T-cell (primary cell): ENCODE measurements at regions of chr12 and their contacts with region 1.

Region 1: GRCh38 chr12:110449799-110450497 is at the start of gene ARPC3:
- DNase-seq: peak; percentile 89 to 97 (median 94)
- ATAC-seq: peak; percentile 93 to 99 (median 98)
- H3K4me3 ChIP-seq: peak within 1 kb of the TSS; percentile 95 to 99
- H3K4me3 Mint-ChIP-seq: peak within 1 kb of the TSS; percentile 100
- H3K27ac ChIP-seq: peak within 1 kb of the TSS; percentile 89
- H3K27ac Mint-ChIP-seq: peak within 1 kb of the TSS; percentile 100
- H3K4me1 ChIP-seq: peaks cover 10 to 39% of the 10 kb centered on the region in 2 experiments
- H3K4me1 Mint-ChIP-seq: peaks cover 39 to 44% (median 43%) of the 10 kb centered on the region in 3 donors
- H3K27me3 ChIP-seq: no peaks in the 10 kb centered on the region
- H3K27me3 Mint-ChIP-seq: no peaks in the 10 kb centered on the region
- total RNA-seq, gene ARPC3: 177 to 204 (median 191) TPM

Region 2: DNA sequence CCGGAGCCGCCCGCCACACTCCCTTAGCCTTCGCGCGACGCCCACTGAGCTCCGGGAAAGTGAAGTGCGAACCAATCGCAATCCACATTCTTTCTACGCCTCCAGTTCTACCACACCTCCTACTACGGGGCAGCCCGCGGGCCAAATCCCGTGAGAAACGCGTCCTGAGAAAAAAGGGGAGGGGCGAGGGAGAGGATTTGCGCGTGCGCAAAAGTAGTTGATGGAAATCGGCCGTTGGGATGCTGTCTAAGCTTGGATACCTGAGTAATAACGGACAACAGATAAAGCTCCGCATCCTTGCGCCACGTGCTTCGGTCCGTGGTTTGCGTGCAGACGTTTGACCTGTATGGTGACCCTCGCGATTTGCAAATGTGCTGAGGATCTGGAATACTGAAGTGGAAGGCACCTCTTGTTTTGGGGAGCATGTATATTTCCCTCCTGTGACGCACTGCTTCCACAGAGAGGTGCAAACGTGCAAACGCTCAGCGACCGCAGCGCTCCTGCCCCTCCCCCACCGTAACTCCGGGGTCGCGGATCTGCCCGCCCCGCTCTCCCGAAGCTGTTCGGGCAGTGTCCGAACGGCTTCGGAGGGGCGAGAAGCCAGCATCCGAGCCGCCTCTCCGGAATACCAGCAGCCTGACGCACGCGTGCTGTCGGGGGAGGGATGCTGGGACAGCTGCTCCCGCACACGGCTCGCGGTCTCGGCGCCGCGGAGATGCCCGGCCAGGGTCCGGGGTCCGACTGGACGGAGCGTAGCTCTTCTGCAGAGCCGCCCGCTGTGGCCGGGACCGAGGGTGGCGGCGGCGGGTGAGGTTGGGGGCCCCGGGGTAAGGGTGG is 18.5 kb after region 1 on chr12 and contains the starts of genes FAM216A and GPN3:
- CTCF ChIA-PET with region 1: interaction called, 7 to 49 read pairs
- POLR2A ChIA-PET with region 1: interaction called, 5 to 9 read pairs
- DNase-seq: peak; percentile 90 to 97 (median 93)
- ATAC-seq: peak; percentile 84 to 90 (median 86)
- H3K4me3 ChIP-seq: peak within 1 kb of the TSS; percentile 84 to 91
- H3K4me3 Mint-ChIP-seq: peak within 1 kb of the TSS; percentile 81 to 97 (median 97)
- H3K27ac ChIP-seq: peak within 1 kb of the TSS; percentile 81
- H3K27ac Mint-ChIP-seq: peak within 1 kb of the TSS; percentile 90 to 93
- H3K4me1 ChIP-seq: peaks cover 10 to 26% of the 10 kb centered on the region in 2 experiments
- H3K4me1 Mint-ChIP-seq: peaks cover 30 to 44% (median 41%) of the 10 kb centered on the region in 3 donors
- H3K27me3 ChIP-seq: no peaks in the 10 kb centered on the region
- H3K27me3 Mint-ChIP-seq: no peaks in the 10 kb centered on the region
- total RNA-seq, gene FAM216A: 6.3 to 16.5 (median 13.2) TPM
- total RNA-seq, gene GPN3: 6.3 to 19.1 (median 13.4) TPM

Region 3: DNA sequence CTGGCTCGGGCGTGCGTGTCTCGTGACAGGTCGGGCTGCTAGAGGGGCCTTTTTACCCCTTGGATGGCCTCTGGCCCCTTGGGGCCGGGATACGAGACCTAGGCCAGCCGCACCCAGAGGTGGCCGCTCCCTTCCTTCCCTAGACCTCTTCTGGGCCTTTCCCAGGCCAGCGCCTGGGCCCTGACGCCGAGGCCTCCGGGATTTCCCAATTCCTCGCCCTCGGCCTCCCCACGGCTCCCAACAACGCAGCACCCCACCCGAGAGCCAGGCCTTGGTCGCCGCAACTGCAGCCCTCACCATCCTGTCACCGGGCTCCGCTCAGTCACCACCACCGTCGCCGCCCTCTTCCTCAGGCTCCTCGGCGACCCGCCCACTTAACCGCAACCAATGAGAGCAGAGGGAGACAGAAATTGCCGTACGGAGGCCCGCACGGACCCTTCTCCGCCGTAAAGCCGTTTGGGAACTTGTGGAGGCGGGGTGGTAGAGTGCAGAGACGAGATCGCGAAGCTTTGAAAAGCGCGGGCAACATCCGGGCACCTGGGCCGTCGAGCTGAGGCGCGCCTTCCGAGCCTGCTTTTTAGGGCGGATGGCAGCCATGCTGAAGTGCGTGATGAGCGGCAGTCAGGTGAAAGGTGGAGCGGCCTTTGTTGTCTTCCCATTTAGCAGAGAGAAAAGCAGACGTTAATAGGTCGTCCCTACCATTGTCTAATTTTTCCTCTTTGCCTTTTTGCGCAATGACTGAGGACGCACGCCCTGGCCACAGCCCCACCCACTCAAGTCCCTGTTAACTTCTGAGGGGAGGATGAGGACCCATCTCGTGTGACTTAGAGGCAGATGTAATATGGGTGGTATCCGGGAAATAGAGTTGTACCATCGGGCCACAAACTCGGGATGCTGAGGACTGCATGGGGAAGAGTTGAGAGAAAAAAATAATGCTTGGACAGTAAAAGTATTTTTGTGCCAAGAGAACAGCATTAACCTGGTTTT is 52.1 kb after region 1 on chr12 and contains the starts of genes RAD9B and VPS29:
- CTCF ChIA-PET with region 1: interaction called in 1 of 2 experiments, 8 read pairs
- POLR2A ChIA-PET with region 1: interaction called, 4 to 12 read pairs
- DNase-seq: peak; percentile 96 to 100 (median 99)
- ATAC-seq: peak; percentile 93 to 96 (median 95)
- H3K4me3 ChIP-seq: peak within 1 kb of the TSS; percentile 74 to 88
- H3K4me3 Mint-ChIP-seq: peak within 1 kb of the TSS; percentile 90 to 99 (median 97)
- H3K27ac ChIP-seq: peak within 1 kb of the TSS; percentile 86
- H3K27ac Mint-ChIP-seq: peak within 1 kb of the TSS; percentile 98
- H3K4me1 ChIP-seq: peaks cover 20% of the 10 kb centered on the region in 2 experiments
- H3K4me1 Mint-ChIP-seq: peaks cover 38 to 45% (median 41%) of the 10 kb centered on the region in 3 donors
- H3K27me3 ChIP-seq: no peaks in the 10 kb centered on the region
- H3K27me3 Mint-ChIP-seq: no peaks in the 10 kb centered on the region
- total RNA-seq, gene RAD9B: 0.18 to 1.6 (median 0.74) TPM in 4 of 5 donors, not detected in the other
- total RNA-seq, gene VPS29: 79.0 to 109 (median 95.4) TPM

Region 4: DNA sequence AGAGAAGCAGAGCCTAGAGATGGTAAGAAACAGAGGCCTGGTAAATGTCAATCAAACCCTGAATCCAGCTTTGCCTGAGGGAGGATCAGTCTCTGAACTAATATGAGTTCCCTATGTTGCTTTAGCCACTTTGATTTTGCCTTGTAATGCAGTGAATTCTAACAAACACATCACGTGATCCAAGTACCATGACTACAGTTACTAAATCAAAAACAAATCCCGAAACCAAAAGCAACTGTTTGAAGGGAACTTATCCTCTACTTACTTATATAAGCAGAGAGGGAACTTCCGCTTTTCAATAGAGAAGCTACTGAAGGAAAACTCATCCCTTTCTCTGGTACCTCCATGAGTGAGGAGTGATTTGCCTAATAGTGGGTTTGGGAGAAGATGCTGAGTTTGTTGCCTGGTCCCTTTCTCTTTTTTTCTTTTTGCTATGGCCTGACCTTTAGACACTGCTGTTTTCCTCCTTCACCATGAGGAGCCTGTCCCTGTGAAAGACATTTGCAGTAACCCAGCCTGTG is 140.9 kb after region 1 on chr12:
- CTCF ChIA-PET with region 1: interaction called, 3 read pairs
- POLR2A ChIA-PET with region 1: interaction called in 1 of 2 experiments, 21 read pairs
- DNase-seq: peak in 4 of 35 experiments; percentile 6 to 79 (median 17)
- ATAC-seq: peak; percentile 69 to 98 (median 84)
- H3K4me3 ChIP-seq: no peak overlapping the region
- H3K4me3 Mint-ChIP-seq: peak overlapping the region; percentile 5 to 56 (median 22)
- H3K27ac ChIP-seq: peak overlapping the region; percentile 85
- H3K27ac Mint-ChIP-seq: peak overlapping the region; percentile 93 to 97
- H3K4me1 ChIP-seq: peaks cover 8 to 18% of the 10 kb centered on the region in 2 experiments
- H3K4me1 Mint-ChIP-seq: peaks cover 25 to 33% (median 26%) of the 10 kb centered on the region in 3 donors
- H3K27me3 ChIP-seq: no peaks in the 10 kb centered on the region
- H3K27me3 Mint-ChIP-seq: no peaks in the 10 kb centered on the region

Region 5: GRCh38 chr12:110888256-110888991 is 438.5 kb after region 1 on chr12:
- CTCF ChIA-PET with region 1: interaction called in 1 of 2 experiments, 14 read pairs
- POLR2A ChIA-PET with region 1: no interaction called
- DNase-seq: no peak
- ATAC-seq: peak in 3 of 4 experiments; percentile 8 to 39 (median 25)
- H3K4me3 ChIP-seq: peak overlapping the region in 1 of 2 donors; percentile 47
- H3K4me3 Mint-ChIP-seq: peak overlapping the region; percentile 14 to 89 (median 85)
- H3K27ac ChIP-seq: no peak overlapping the region
- H3K27ac Mint-ChIP-seq: no peak overlapping the region
- H3K4me1 ChIP-seq: peaks cover 0 to 13% of the 10 kb centered on the region in 2 experiments
- H3K4me1 Mint-ChIP-seq: peaks cover 5 to 8% (median 6%) of the 10 kb centered on the region in 3 donors
- H3K27me3 ChIP-seq: peaks cover 0 to 15% of the 10 kb centered on the region in 2 experiments
- H3K27me3 Mint-ChIP-seq: peaks cover 0 to 3% of the 10 kb centered on the region in 2 donors